ENCODE measurements at regions of chr17 and their contacts with region 1.

Region 1: DNA sequence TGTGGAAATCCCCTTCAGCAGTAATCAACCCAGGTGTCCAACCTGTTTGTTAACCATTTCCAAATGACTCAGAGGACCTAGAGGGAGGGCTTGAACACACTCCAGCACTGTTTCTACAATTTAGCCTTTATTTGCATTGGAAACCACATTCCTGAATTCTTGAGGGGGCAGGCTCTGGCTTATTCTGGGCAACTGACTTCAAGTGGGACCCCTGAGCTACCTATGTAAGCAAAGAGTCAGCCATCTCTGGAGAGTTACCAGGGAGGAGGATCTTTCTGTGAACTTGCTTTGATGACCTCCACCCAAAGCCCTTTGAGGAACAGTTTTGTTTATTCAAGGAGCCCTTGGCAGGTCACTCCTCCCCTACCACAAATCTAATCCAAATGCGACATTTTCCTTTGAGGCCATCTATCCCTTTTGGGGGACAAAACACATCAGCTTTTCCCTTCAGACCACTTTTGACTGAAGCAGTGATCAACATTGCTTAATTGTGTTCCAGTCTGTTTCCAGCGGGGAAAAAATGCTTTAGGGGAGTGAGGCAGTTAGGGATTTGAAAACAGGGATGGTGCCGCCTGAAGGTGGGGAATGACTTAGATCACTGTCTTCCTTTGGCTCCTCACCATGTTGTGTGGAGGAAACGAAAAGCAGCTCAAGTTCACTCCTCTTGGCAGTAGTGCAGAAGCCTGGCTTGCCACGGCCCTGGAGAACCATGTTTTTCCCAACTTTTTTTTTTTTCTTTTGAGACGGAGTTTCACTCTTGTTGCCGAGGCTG is 46.2 kb downstream of the TUBD1 start:
- DNase-seq: peak; percentile 53
- H3K4me3 Mint-ChIP-seq: peak overlapping the region; percentile 28
- H3K27ac Mint-ChIP-seq: peak overlapping the region; percentile 100
- H3K4me1 Mint-ChIP-seq: peaks cover 76% of the 10 kb centered on the region
- H3K27me3 Mint-ChIP-seq: no peaks in the 10 kb centered on the region

Region 2: GRCh38 chr17:59695945-59696692 is 150.5 kb before region 1 on chr17:
- CTCF ChIA-PET with region 1: no interaction called
- intact Hi-C with region 1: no loop called
- DNase-seq: no peak
- H3K4me3 Mint-ChIP-seq: no peak overlapping the region
- H3K27ac Mint-ChIP-seq: peak overlapping the region; percentile 79
- H3K4me1 Mint-ChIP-seq: peaks cover 44% of the 10 kb centered on the region
- H3K27me3 Mint-ChIP-seq: no peaks in the 10 kb centered on the region

Region 3: DNA sequence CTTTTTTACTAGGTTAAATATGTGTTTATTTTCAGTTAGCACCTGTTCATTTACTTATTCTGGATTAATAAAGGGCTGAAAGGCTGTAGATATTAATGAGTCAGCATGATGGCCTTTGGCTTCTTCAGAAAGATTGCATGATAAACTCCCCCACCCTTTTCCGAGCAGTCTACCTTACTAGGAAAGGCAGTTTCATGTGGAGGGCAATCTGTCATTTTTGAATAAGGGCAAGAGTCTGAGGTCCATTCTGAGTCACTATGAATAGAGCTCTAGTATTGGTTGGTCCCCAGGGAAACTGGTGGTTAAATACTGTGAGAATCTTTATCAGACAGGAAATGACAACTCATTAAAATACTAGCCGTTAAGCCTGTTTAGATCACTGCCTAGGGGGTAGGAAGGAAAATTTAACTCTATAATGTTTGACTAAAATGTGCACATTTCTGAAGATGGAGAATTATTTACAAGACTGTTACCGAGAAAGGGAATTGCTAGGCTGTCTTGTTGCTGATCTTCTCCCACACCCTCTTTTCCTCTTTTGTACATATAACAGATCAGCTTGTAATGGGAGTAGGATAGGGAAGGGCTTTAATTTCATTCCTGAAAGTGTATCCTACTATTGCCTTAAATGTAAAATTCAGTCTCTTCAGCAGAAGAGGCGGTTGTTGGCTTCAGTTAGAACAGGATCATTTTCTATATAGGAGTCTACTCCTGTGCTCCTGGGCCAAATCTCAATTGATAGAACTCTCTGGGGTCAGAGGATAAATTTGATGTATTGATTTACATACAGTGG is 17.2 kb before region 1 on chr17:
- CTCF ChIA-PET with region 1: interaction called, 3 read pairs
- intact Hi-C with region 1: loop called (anchors 1 kb)
- DNase-seq: peak; percentile 79
- H3K4me3 Mint-ChIP-seq: peak overlapping the region; percentile 77
- H3K27ac Mint-ChIP-seq: peak overlapping the region; percentile 99
- H3K4me1 Mint-ChIP-seq: peaks cover 85% of the 10 kb centered on the region
- H3K27me3 Mint-ChIP-seq: no peaks in the 10 kb centered on the region

Region 4: GRCh38 chr17:59859444-59860025 is 13.0 kb after region 1 on chr17:
- CTCF ChIA-PET with region 1: interaction called, 11 read pairs
- intact Hi-C with region 1: no loop called
- DNase-seq: no peak
- H3K4me3 Mint-ChIP-seq: no peak overlapping the region
- H3K27ac Mint-ChIP-seq: peak overlapping the region; percentile 65
- H3K4me1 Mint-ChIP-seq: peaks cover 21% of the 10 kb centered on the region
- H3K27me3 Mint-ChIP-seq: no peaks in the 10 kb centered on the region